GM18951 (cell line): ENCODE measurements at regions of chr2 and their contacts with region 1.

Region 1: GRCh38 chr2:47339745-47340541 is 63.0 kb upstream of the MSH2 start:
- POLR2A ChIP-seq: no peak

Region 2: GRCh38 chr2:46749042-46749531 is 590.9 kb before region 1 on chr2:
- in situ Hi-C with region 1: no loop called
- POLR2A ChIP-seq: no peak

Region 3: GRCh38 chr2:47767880-47768609 is 428.1 kb after region 1 on chr2:
- in situ Hi-C with region 1: loop called (anchors 10 kb)
- POLR2A ChIP-seq: no peak

Region 4: GRCh38 chr2:48016225-48017019 is 676.5 kb after region 1 on chr2:
- in situ Hi-C with region 1: no loop called
- POLR2A ChIP-seq: no peak